ENCODE measurements at regions of chr18 and their contacts with region 1.

Region 1: DNA sequence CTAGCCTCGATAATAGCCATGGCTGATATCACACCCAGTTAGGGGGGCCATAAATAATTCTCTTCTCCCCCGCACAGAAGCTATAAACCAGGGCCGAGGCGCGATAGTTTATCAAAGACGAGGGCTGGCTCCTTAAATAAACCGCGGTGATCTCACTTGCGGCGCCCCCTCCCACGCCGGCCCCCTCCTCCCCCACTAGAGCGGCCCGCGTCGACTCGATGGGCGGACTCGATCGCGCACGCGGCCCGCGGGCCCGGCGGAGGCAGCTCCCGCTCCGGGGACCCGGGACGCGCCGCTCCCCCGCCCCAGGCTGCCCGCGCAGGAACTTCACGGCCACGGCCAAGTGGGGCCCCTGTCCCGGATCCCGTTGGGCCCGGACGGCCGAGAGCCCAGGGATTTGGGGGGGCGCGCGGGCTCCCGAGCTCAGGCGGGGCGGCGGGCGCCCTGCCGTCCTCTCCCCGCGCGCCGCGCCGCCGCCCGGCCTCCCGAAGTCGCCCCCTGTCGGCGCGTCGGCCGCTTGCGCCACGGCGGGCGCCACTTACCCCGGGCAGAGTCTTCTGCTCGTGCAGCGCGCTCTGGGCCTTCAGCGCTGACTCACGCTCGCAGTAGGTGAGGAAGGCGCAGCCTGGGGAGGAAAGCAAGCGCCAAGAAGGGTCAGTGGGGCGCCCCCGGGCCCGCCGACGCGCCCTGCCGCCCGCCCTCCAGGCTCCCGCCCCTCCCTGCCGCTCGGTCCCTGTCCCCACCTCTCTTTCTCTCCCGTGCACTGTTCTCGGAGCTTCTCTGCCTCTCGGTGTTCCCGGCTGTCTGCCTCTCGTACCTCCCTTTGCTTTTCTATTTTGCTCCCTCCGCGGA is 80.4 kb downstream of the CELF4 start:
- DNase-seq: no peak
- H3K4me3 ChIP-seq: no peak overlapping the region
- CTCF ChIP-seq: no peak
- POLR2A ChIP-seq: no peak

Region 2: DNA sequence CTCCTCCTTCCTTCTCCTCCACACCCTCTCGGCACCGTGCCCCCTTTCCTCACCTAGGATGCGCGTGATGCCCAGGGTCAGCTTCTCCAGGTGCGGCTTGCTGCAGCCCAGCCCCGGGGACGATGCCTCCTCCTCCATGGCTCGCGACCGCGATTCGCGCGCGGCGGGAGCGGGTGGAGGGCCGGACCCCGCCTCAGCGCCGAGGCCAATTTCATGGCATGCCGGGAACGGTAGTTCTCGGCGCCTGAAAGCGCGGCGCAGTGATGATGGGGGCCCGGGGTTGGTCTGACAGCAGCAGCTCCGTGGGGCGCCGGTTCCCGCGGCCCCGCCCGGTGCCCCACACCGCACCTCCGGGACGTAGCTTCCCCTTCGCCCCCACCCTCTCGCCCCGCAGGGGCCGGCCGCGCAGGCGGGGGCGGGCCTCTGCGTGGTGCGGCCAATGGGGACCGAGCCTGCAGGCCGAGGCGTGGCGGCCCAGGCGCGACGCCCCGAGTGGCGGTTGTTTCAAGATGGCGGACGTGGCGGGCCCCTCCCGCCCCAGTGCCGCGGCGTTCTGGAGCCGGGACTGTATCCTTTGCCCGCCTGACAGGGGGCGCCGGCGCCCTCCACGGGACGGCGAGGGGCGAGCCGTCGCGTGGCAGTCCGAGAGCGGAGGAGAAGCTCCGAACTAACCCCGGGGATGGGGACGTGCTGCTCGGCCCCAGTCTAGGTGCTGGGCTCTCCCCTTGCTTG is 656.4 kb before region 1 on chr18 and contains the starts of genes KIAA1328 and TPGS2:
- intact Hi-C with region 1: no loop called
- DNase-seq: peak; percentile 76 to 96
- H3K4me3 ChIP-seq: peak within 1 kb of the TSS; percentile 76
- CTCF ChIP-seq: no peak
- POLR2A ChIP-seq: no peak
- total RNA-seq, gene KIAA1328: 16.1 to 32.0 (median 20.1) TPM
- total RNA-seq, gene TPGS2: 59.5 to 84.2 (median 75.9) TPM

Region 3: GRCh38 chr18:37346048-37346447 is 139.2 kb before region 1 on chr18:
- intact Hi-C with region 1: loop called (anchors 10 kb)
- DNase-seq: no peak
- H3K4me3 ChIP-seq: no peak overlapping the region
- CTCF ChIP-seq: no peak
- POLR2A ChIP-seq: no peak

Region 4: DNA sequence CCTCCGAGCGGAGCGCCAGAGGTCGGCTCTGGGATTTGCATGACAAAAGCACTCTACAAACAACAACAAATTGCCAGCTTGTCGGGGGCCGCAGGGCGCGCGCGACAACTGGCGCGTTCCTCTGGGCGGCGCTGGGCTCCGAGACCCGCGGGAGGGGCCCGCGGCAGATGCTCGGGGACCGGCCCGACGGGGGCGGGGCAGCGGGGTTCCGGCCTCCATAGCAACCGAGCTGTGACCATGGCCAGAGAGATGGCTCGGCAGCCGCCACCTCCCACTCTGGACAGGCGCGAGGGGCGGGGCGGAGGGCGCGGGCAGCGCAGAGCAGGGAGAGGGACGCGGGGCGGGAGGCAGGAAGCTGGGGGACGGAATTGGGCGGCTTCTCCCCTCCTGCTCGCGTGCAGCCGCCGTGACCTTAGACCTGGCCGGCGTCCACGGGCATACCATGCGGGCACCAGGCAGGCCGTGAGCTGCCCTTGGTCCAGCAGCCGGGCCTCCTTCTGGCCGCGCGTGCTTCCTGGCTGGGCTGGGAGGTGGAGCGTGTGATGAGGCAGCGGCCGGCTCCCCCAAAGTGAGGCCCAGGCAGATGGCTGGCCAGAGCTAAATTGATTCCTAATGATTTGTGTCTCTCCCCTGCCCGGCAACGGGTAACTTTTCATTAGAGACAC is 91.1 kb before region 1 on chr18:
- intact Hi-C with region 1: no loop called
- DNase-seq: peak; percentile 49 to 92
- H3K4me3 ChIP-seq: no peak overlapping the region
- CTCF ChIP-seq: no peak
- POLR2A ChIP-seq: no peak

Region 5: DNA sequence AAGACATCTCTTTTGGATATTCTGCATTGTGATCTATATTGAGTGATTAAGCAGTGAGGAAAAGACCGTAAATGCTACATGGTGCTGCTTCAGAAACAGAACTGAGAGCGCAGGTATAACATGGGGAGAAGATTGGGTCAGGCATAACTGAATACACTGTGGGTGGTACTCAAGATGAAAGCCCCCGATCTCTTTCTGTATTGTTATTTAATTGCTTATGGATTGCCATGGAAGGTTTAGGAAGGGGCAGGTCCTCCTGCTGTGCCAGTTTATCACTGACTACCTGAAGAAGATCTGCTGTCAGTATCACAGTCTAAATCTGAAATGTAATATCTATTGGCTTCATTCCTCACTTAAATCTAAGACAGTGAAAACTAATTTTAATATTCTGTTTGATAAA is 1649.0 kb after region 1 on chr18:
- intact Hi-C with region 1: no loop called
- DNase-seq: no peak
- H3K4me3 ChIP-seq: no peak overlapping the region
- CTCF ChIP-seq: no peak
- POLR2A ChIP-seq: no peak